ENCODE measurements at regions of chr2 and their contacts with region 1.

Region 1: GRCh38 chr2:15636972-15637785 is 45.5 kb downstream of the DDX1 start:
- DNase-seq: no peak
- ATAC-seq: peak; percentile 99
- H3K4me3 ChIP-seq: no peak overlapping the region
- H3K27ac ChIP-seq: no peak overlapping the region
- H3K4me1 ChIP-seq: no peaks in the 10 kb centered on the region
- H3K27me3 ChIP-seq: no peaks in the 10 kb centered on the region
- CTCF ChIP-seq: peak; percentile 72 to 97 (median 89); a peak in 5 of 6 replicates
- EP300 ChIP-seq: no peak
- POLR2A ChIP-seq: no peak
- RAD21 ChIP-seq: peak; percentile 89

Region 2: DNA sequence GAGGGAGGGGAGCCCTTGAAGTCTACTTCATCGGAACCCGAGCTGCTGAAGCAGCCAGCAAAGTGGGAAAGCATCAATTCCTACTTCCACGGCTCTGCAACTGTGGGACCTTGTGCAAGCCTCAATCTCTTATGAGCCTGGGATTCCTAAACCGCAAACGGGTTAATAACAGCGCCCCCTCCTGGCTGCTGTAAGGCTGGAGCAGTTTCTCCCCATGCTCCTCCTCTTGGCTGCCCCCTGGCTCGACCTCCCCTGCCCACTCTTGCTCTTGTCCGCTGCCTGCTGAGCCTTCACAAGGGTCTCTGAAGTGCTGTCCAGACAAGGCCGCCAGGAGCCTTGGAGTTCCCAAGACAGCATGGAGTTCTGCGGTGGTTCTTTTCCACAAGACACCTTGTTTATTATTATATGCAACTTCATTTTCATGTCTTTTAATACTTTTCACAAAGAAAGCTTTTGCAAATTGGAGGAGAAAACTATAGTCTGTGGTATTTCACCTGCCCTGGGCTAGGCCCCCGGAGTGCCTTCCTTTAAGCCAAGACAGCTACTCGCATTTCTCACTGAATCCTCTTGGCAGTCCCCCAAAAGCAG is 111.7 kb after region 1 on chr2:
- CTCF ChIA-PET with region 1: interaction called, 6 read pairs
- POLR2A ChIA-PET with region 1: no interaction called
- RAD21 ChIA-PET with region 1: no interaction called
- SMC1A ChIA-PET with region 1: no interaction called
- in situ Hi-C with region 1: no loop called
- intact Hi-C with region 1: loop called (anchors 2 kb)
- DNase-seq: no peak
- ATAC-seq: peak; percentile 56
- H3K4me3 ChIP-seq: no peak overlapping the region
- H3K27ac ChIP-seq: no peak overlapping the region
- H3K4me1 ChIP-seq: no peaks in the 10 kb centered on the region
- H3K27me3 ChIP-seq: 0 out of 4 replicates have a peak, but pooled peaks cover 1 to 3% of the 10 kb centered on the region in 2 experiments
- CTCF ChIP-seq: peak in 2 of 3 experiments; percentile 29 to 46; a peak in 4 of 6 replicates
- EP300 ChIP-seq: no peak
- POLR2A ChIP-seq: no peak
- RAD21 ChIP-seq: no peak

Region 3: DNA sequence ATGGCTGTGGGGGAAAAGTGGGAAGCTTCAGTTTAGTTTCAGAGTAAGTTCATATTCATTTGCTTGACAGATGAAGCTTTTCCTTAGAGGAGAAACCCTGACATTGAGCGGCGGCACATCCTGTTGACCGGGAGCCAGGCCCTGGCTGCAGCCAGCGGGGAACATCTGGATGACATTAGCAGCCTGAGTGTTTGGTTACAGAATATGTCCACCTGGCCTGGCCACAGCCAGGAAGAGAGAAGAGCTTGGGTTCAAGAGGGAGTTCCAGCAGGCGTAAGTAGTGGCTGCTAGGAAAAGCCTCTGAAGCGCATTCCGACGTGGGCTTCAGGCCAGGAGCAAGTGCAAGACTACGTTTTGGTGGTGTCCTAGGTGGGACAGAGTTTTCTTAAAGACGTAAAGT is 158.2 kb after region 1 on chr2:
- CTCF ChIA-PET with region 1: no interaction called
- POLR2A ChIA-PET with region 1: no interaction called
- RAD21 ChIA-PET with region 1: no interaction called
- SMC1A ChIA-PET with region 1: no interaction called
- in situ Hi-C with region 1: no loop called
- intact Hi-C with region 1: no loop called
- DNase-seq: no peak
- ATAC-seq: no peak
- H3K4me3 ChIP-seq: no peak overlapping the region
- H3K27ac ChIP-seq: no peak overlapping the region
- H3K4me1 ChIP-seq: no peaks in the 10 kb centered on the region
- H3K27me3 ChIP-seq: peaks cover 0 to 2% of the 10 kb centered on the region in 2 experiments; a peak in 2 of 4 replicates
- CTCF ChIP-seq: no peak
- EP300 ChIP-seq: no peak
- POLR2A ChIP-seq: no peak
- RAD21 ChIP-seq: no peak

Region 4: GRCh38 chr2:15939854-15940660 is 302.9 kb after region 1 on chr2 and contains the start of gene MYCN:
- CTCF ChIA-PET with region 1: no interaction called
- POLR2A ChIA-PET with region 1: no interaction called
- RAD21 ChIA-PET with region 1: no interaction called
- SMC1A ChIA-PET with region 1: no interaction called
- in situ Hi-C with region 1: no loop called
- intact Hi-C with region 1: loop called (anchors 1 kb)
- DNase-seq: no peak
- ATAC-seq: no peak
- H3K4me3 ChIP-seq: no peak within 1 kb of the TSS
- H3K27ac ChIP-seq: no peak within 1 kb of the TSS
- H3K4me1 ChIP-seq: no peaks in the 10 kb centered on the region
- H3K27me3 ChIP-seq: peaks cover 12 to 14% of the 10 kb centered on the region in 2 experiments
- CTCF ChIP-seq: peak in 1 of 3 experiments; percentile 45; a peak in 3 of 6 replicates
- EP300 ChIP-seq: no peak
- POLR2A ChIP-seq: no peak
- RAD21 ChIP-seq: peak; percentile 74
- polyA plus RNA-seq, gene MYCN: not detected

Region 5: GRCh38 chr2:16218625-16219024 is 581.4 kb after region 1 on chr2:
- CTCF ChIA-PET with region 1: interaction called, 3 read pairs
- POLR2A ChIA-PET with region 1: no interaction called
- RAD21 ChIA-PET with region 1: no interaction called
- SMC1A ChIA-PET with region 1: no interaction called
- in situ Hi-C with region 1: no loop called
- intact Hi-C with region 1: loop called (anchors 5 kb)
- DNase-seq: no peak
- ATAC-seq: peak; percentile 46; the same call in 1 of the 3 replicates
- H3K4me3 ChIP-seq: no peak overlapping the region
- H3K27ac ChIP-seq: no peak overlapping the region
- H3K4me1 ChIP-seq: no peaks in the 10 kb centered on the region
- H3K27me3 ChIP-seq: no peaks in the 10 kb centered on the region
- CTCF ChIP-seq: peak; percentile 21 to 36 (median 35); a peak in 3 of 6 replicates
- EP300 ChIP-seq: no peak
- POLR2A ChIP-seq: no peak
- RAD21 ChIP-seq: peak; percentile 19; the same call in 1 of the 2 replicates

Region 6: GRCh38 chr2:16281451-16282336 is 644.5 kb after region 1 on chr2:
- CTCF ChIA-PET with region 1: interaction called, 8 read pairs
- POLR2A ChIA-PET with region 1: no interaction called
- RAD21 ChIA-PET with region 1: interaction called, 3 read pairs
- SMC1A ChIA-PET with region 1: interaction called, 6 read pairs
- in situ Hi-C with region 1: loop called (anchors 10 kb)
- intact Hi-C with region 1: loop called (anchors 1 kb)
- DNase-seq: no peak
- ATAC-seq: peak; percentile 83
- H3K4me3 ChIP-seq: no peak overlapping the region
- H3K27ac ChIP-seq: no peak overlapping the region
- H3K4me1 ChIP-seq: no peaks in the 10 kb centered on the region
- H3K27me3 ChIP-seq: no peaks in the 10 kb centered on the region; a peak in 2 of 4 replicates
- CTCF ChIP-seq: peak; percentile 33 to 45 (median 35); a peak in 5 of 6 replicates
- EP300 ChIP-seq: no peak
- POLR2A ChIP-seq: no peak
- RAD21 ChIP-seq: peak; percentile 47

Region 7: GRCh38 chr2:16487686-16488085 is 850.5 kb after region 1 on chr2:
- CTCF ChIA-PET with region 1: no interaction called
- POLR2A ChIA-PET with region 1: no interaction called
- RAD21 ChIA-PET with region 1: no interaction called
- SMC1A ChIA-PET with region 1: no interaction called
- in situ Hi-C with region 1: no loop called
- intact Hi-C with region 1: loop called (anchors 1 kb)
- DNase-seq: no peak
- ATAC-seq: no peak
- H3K4me3 ChIP-seq: no peak overlapping the region
- H3K27ac ChIP-seq: no peak overlapping the region
- H3K4me1 ChIP-seq: no peaks in the 10 kb centered on the region
- H3K27me3 ChIP-seq: no peaks in the 10 kb centered on the region
- CTCF ChIP-seq: peak in 2 of 3 experiments; percentile 8 to 16; a peak in 1 of 6 replicates
- EP300 ChIP-seq: no peak
- POLR2A ChIP-seq: no peak
- RAD21 ChIP-seq: peak; percentile 28

Region 8: GRCh38 chr2:16507655-16508489 is 870.7 kb after region 1 on chr2:
- CTCF ChIA-PET with region 1: no interaction called
- POLR2A ChIA-PET with region 1: no interaction called
- RAD21 ChIA-PET with region 1: no interaction called
- SMC1A ChIA-PET with region 1: no interaction called
- in situ Hi-C with region 1: no loop called
- intact Hi-C with region 1: loop called (anchors 5 kb)
- DNase-seq: no peak
- ATAC-seq: peak; percentile 69
- H3K4me3 ChIP-seq: no peak overlapping the region
- H3K27ac ChIP-seq: no peak overlapping the region
- H3K4me1 ChIP-seq: no peaks in the 10 kb centered on the region
- H3K27me3 ChIP-seq: peaks cover 4 to 11% of the 10 kb centered on the region in 2 experiments; a peak in 3 of 4 replicates
- CTCF ChIP-seq: peak; percentile 25 to 40 (median 39); a peak in 4 of 6 replicates
- EP300 ChIP-seq: no peak
- POLR2A ChIP-seq: no peak
- RAD21 ChIP-seq: peak; percentile 24; the same call in 1 of the 2 replicates